ENCODE measurements at regions of chr1 and their contacts with region 1.

Region 1: GRCh38 chr1:66446261-66447001 is 87.5 kb upstream of the SGIP1 start:
- DNase-seq: no peak
- ATAC-seq: peak; percentile 69
- H3K4me3 Mint-ChIP-seq: peak overlapping the region; percentile 69
- H3K27ac Mint-ChIP-seq: peak overlapping the region; percentile 93
- H3K4me1 Mint-ChIP-seq: peaks cover 33% of the 10 kb centered on the region
- H3K27me3 Mint-ChIP-seq: no peaks in the 10 kb centered on the region
- CTCF ChIP-seq: no peak

Region 2: DNA sequence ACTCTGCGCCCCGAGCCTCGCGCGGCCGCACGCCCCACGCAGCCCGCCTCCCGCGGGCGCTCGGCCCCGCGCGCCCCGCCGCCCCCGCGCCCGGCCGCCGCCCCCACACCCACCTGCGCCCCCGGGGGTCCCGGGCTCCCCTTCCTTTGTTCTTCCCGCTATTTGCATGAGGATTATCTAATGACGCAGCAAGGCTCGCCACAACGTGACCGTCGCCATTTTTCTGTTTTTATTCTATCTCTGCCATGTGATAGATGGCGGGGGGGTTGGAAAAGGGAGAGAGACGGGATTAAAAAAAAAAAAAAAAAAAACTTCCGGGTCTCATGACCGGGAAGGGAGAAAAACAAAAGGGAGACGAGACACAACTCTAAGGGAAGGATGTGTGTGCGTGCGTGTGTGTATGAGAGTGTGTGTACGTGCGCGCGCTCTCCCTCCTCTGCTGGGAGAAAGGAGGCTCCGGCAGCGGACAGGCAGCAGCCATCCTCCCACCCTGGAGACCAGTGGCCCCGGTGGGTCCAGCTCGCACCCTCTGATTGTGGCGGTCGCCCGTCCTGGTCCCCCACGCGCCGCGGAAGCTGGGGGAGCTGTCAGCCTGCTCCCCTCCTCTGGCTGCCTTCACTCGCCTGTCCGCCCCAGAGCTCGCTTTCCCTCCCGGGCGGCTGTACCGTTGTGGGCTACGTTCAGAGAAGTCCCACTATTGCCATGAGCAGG is 1378.8 kb before region 1 on chr1:
- CTCF ChIA-PET with region 1: no interaction called
- POLR2A ChIA-PET with region 1: no interaction called
- intact Hi-C with region 1: loop called (anchors 5 kb)
- DNase-seq: peak; percentile 50
- ATAC-seq: peak; percentile 15
- H3K4me3 Mint-ChIP-seq: peak overlapping the region; percentile 97
- H3K27ac Mint-ChIP-seq: peak overlapping the region; percentile 99
- H3K4me1 Mint-ChIP-seq: peaks cover 48% of the 10 kb centered on the region
- H3K27me3 Mint-ChIP-seq: no peaks in the 10 kb centered on the region
- CTCF ChIP-seq: no peak

Region 3: GRCh38 chr1:65958561-65959350 is 487.7 kb before region 1 on chr1:
- CTCF ChIA-PET with region 1: interaction called, 85 read pairs
- POLR2A ChIA-PET with region 1: interaction called, 4 read pairs
- intact Hi-C with region 1: loop called (anchors 1 kb)
- DNase-seq: no peak
- ATAC-seq: peak; percentile 40
- H3K4me3 Mint-ChIP-seq: no peak overlapping the region
- H3K27ac Mint-ChIP-seq: no peak overlapping the region
- H3K4me1 Mint-ChIP-seq: peaks cover 4% of the 10 kb centered on the region
- H3K27me3 Mint-ChIP-seq: no peaks in the 10 kb centered on the region
- CTCF ChIP-seq: peak; percentile 44

Region 4: DNA sequence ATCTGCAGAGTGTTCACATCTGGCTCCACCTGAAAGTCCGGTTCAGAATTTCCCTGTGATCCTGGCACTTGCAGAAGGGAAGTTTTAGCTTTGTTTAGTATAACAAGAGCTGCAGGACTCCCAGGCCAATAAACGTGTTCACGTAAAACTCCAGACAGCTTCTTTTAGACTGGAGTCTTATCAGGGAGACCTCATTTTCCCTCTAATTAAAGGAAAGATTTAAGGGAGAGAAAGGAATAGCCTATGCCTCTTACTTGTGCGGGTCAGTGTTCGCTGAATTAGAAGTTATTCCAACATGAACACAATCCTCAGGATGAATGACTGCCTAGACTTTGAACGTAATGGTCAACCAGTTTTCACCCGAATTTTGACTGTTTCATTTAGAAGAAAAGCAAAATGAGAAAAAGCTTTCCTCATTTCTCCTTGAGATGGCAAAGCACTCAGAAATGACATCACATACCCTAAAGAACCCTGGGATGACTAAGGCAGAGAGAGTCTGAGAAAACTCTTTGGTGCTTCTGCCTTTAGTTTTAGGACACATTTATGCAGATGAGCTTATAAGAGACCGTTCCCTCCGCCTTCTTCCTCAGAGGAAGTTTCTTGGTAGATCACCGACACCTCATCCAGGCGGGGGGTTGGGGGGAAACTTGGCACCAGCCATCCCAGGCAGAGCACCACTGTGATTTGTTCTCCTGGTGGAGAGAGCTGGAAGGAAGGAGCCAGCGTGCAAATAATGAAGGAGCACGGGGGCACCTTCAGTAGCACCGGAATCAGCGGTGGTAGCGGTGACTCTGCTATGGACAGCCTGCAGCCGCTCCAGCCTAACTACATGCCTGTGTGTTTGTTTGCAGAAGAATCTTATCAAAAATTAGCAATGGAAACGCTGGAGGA is 114.5 kb before region 1 on chr1:
- CTCF ChIA-PET with region 1: interaction called, 26 read pairs
- POLR2A ChIA-PET with region 1: interaction called, 62 read pairs
- intact Hi-C with region 1: loop called (anchors 1 kb)
- DNase-seq: no peak
- ATAC-seq: peak; percentile 9
- H3K4me3 Mint-ChIP-seq: peak overlapping the region; percentile 98
- H3K27ac Mint-ChIP-seq: peak overlapping the region; percentile 98
- H3K4me1 Mint-ChIP-seq: peaks cover 70% of the 10 kb centered on the region
- H3K27me3 Mint-ChIP-seq: no peaks in the 10 kb centered on the region
- CTCF ChIP-seq: no peak

Region 5: DNA sequence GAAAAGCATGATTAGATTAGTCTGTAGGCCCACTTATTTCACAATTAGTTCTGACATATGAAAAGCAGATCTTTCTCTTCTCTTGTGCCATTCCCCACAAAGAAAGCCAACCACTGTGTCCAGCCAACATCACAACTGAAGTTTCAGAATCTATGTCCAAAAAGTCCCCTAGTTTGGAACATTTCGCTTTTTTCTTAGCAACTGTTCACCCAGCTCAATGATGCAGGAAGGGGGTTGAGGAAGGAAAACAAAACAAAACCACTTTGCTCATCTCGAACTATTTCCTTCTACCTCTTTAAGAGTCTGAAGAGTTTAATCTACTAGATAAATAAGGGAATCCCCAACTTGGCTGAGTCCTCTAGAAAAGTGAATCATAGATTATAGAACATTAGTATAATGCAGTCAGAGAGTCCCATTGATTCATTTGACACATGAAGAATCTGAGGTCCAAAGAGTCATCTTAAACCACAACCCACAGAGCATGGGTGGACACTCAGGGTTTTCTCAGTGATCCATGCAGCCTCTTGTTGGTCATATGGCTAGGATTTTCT is 71.8 kb before region 1 on chr1:
- CTCF ChIA-PET with region 1: interaction called, 182 read pairs
- POLR2A ChIA-PET with region 1: interaction called, 46 read pairs
- intact Hi-C with region 1: loop called (anchors 1 kb)
- DNase-seq: no peak
- ATAC-seq: peak; percentile 79
- H3K4me3 Mint-ChIP-seq: peak overlapping the region; percentile 39
- H3K27ac Mint-ChIP-seq: peak overlapping the region; percentile 93
- H3K4me1 Mint-ChIP-seq: peaks cover 94% of the 10 kb centered on the region
- H3K27me3 Mint-ChIP-seq: no peaks in the 10 kb centered on the region
- CTCF ChIP-seq: no peak

Region 6: DNA sequence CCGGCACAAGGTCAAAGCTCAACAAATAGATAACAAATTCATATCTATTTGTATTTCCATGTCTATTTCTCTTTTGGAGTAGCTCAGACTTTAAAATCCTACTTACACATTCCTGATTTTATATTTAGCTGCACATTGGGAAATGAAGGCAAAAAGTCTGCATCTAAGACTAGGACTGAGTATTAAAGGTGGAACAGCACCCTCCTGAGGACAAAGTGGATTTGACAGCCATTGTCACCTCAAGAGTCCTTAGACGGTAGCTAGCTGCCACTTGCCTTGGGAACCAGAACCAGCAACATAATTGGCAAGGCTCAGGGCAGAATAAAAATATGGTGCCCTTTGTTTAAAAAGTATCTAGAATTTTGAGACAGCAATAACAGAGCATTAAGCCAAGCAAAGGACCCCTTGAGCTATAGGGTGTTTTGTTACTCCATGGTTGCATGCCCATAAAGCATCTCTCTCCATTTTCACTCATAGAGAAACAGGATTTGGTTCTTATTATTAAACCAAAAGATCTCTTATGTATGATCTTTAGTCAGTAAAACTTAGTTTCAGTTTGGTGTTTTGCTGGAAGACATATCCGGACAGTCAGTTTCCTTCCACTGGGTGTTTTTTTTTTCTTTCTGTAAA is 57.5 kb after region 1 on chr1:
- CTCF ChIA-PET with region 1: interaction called, 18 read pairs
- POLR2A ChIA-PET with region 1: no interaction called
- intact Hi-C with region 1: loop called (anchors 1 kb)
- DNase-seq: no peak
- ATAC-seq: no peak
- H3K4me3 Mint-ChIP-seq: no peak overlapping the region
- H3K27ac Mint-ChIP-seq: no peak overlapping the region
- H3K4me1 Mint-ChIP-seq: no peaks in the 10 kb centered on the region
- H3K27me3 Mint-ChIP-seq: peaks cover 15% of the 10 kb centered on the region
- CTCF ChIP-seq: no peak